Ovary (tissue), 10 donors: ENCODE measurements at regions of chr7 and their contacts with region 1.

Region 1: DNA sequence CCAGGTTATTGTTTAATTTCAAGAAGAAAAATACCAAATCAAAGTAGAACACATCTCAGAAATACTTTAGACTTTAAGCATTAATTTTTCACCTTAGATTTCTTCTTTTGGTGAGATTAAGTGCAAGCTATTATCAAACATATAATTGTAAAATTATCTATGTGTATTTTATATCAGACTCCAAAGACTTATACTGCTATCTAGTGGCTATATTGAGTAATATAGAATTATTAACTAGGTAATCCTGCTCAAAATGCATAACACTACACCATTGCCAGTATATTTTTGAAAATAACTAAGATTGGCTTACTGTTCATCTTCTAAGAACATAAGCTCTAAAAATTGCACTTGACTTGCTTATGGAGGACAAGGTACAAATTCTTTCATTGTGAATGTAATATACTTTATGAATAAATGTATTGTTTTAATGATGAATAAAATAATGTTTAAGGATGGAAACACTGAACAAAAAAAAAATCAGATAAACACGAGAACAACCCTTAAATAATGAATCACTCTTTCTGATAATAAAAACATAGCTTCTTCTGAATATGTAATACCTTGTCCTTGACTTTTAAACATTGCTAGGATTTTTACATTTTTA is 86.7 kb upstream of the GNAI1 start:
- DNase-seq: no peak
- H3K4me3 ChIP-seq: no peak overlapping the region
- H3K27ac ChIP-seq: no peak overlapping the region
- H3K4me1 ChIP-seq: no peaks in the 10 kb centered on the region
- H3K27me3 ChIP-seq: no peaks in the 10 kb centered on the region
- CTCF ChIP-seq: no peak
- EP300 ChIP-seq: no peak
- POLR2A ChIP-seq: no peak

Region 2: DNA sequence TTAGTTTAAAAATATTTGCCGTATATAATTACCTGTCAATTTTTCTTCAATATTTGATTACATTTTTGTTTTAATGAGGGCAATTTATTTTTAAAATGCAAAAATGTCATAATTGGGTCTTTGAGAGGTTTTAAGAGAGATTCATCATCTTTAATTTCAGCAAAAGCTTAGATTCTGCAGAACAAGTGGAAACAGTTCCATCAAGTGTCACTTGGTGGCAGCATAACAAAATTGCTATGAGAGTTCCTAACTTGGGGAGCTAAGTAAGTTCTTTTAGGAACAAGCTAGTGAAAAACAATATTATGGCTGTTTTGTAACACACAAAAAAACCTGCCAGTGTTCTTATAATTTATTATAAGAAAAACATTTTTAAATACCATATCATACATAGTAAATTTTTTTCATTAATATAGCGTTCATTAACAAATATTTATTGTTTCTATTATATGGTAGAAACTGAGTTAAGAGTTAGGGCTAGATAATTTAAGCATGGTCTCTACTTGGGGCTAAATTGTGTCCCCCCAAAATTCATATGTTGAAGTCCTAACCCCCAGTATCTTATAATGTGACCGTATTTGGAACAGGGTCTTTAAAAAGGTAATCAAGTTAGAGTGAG is 749.7 kb before region 1 on chr7:
- intact Hi-C with region 1: loop called in 1 of 4 experiments (anchors 10 kb)
- DNase-seq: peak in 3 of 5 donors; percentile 12 to 40 (median 16)
- H3K4me3 ChIP-seq: no peak overlapping the region
- H3K27ac ChIP-seq: no peak overlapping the region
- H3K4me1 ChIP-seq: no peaks in the 10 kb centered on the region
- H3K27me3 ChIP-seq: no peaks in the 10 kb centered on the region
- CTCF ChIP-seq: peak; percentile 37 to 57 (median 45)
- EP300 ChIP-seq: no peak
- POLR2A ChIP-seq: no peak